Ovary (tissue), 10 donors: ENCODE measurements at regions of chr1 and their contacts with region 1.

Region 1: GRCh38 chr1:38026592-38027200 is 14.2 kb downstream of the UTP11 start:
- DNase-seq: peak in 2 of 5 donors; percentile 38 to 61
- H3K4me3 ChIP-seq: no peak overlapping the region
- H3K27ac ChIP-seq: no peak overlapping the region
- H3K4me1 ChIP-seq: peaks cover 17% of the 10 kb centered on the region
- H3K27me3 ChIP-seq: no peaks in the 10 kb centered on the region
- CTCF ChIP-seq: peak in 1 of 3 donors; percentile 12
- EP300 ChIP-seq: no peak
- POLR2A ChIP-seq: no peak

Region 2: GRCh38 chr1:37989361-37989930 is 37.2 kb before region 1 on chr1:
- intact Hi-C with region 1: loop called in 1 of 4 experiments (anchors 5 kb)
- DNase-seq: peak in 2 of 5 donors; percentile 30 to 55
- H3K4me3 ChIP-seq: peak overlapping the region; percentile 81
- H3K27ac ChIP-seq: peak overlapping the region in 1 of 2 donors; percentile 10
- H3K4me1 ChIP-seq: peaks cover 3% of the 10 kb centered on the region
- H3K27me3 ChIP-seq: no peaks in the 10 kb centered on the region
- CTCF ChIP-seq: no peak
- EP300 ChIP-seq: no peak
- POLR2A ChIP-seq: no peak

Region 3: DNA sequence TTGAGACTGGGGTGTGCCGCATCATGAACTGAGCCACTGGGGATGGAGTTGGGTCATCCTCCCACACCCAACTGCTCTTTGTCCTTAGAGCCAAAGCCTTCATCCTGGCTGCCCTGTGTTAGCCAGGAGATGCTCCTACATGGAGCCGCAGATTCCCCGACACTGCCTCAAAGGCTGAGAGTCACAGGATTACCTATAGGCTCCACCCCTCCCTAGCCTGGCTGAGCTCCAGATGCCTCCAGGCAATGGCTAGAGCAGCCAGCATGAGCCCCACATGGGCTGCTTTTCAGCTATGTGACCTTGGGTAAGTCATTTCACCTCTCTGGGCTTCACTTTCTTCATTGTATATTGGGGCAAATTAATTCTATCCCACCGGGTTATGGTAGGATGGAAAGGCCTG is 139.8 kb after region 1 on chr1:
- intact Hi-C with region 1: no loop called
- DNase-seq: no peak
- H3K4me3 ChIP-seq: no peak overlapping the region
- H3K27ac ChIP-seq: no peak overlapping the region
- H3K4me1 ChIP-seq: no peaks in the 10 kb centered on the region
- H3K27me3 ChIP-seq: no peaks in the 10 kb centered on the region
- CTCF ChIP-seq: no peak
- EP300 ChIP-seq: no peak
- POLR2A ChIP-seq: no peak

Region 4: GRCh38 chr1:38571726-38572125 is 545.0 kb after region 1 on chr1:
- intact Hi-C with region 1: no loop called
- DNase-seq: no peak
- H3K4me3 ChIP-seq: no peak overlapping the region
- H3K27ac ChIP-seq: no peak overlapping the region
- H3K4me1 ChIP-seq: no peaks in the 10 kb centered on the region
- H3K27me3 ChIP-seq: no peaks in the 10 kb centered on the region
- CTCF ChIP-seq: no peak
- EP300 ChIP-seq: no peak
- POLR2A ChIP-seq: no peak

Region 5: GRCh38 chr1:38834937-38835827 is 808.5 kb after region 1 on chr1:
- intact Hi-C with region 1: loop called in 2 of 4 experiments (anchors 10 kb)
- DNase-seq: peak in 1 of 5 donors; percentile 37
- H3K4me3 ChIP-seq: no peak overlapping the region
- H3K27ac ChIP-seq: no peak overlapping the region
- H3K4me1 ChIP-seq: no peaks in the 10 kb centered on the region
- H3K27me3 ChIP-seq: no peaks in the 10 kb centered on the region
- CTCF ChIP-seq: peak; percentile 51 to 64 (median 62)
- EP300 ChIP-seq: no peak
- POLR2A ChIP-seq: no peak